PC-9 (cell line): ENCODE measurements at regions of chr9 and their contacts with region 1.

Region 1: GRCh38 chr9:120755827-120756434 is 37.3 kb downstream of the FBXW2 start:
- DNase-seq: peak; percentile 48 to 61
- H3K4me3 ChIP-seq: no peak overlapping the region
- H3K27ac ChIP-seq: 0 out of 2 replicates have a peak overlapping the region, but pooled peaks have one; percentile 13
- H3K4me1 ChIP-seq: no peaks in the 10 kb centered on the region
- H3K27me3 ChIP-seq: no peaks in the 10 kb centered on the region
- CTCF ChIP-seq: peak; percentile 96

Region 2: GRCh38 chr9:120714088-120714845 is 41.7 kb before region 1 on chr9 and contains the start of gene MEGF9:
- CTCF ChIA-PET with region 1: interaction called, 5 read pairs
- POLR2A ChIA-PET with region 1: interaction called, 3 read pairs
- intact Hi-C with region 1: loop called (anchors 1 kb)
- DNase-seq: peak; percentile 91 to 99
- H3K4me3 ChIP-seq: peak within 1 kb of the TSS; percentile 75
- H3K27ac ChIP-seq: peak within 1 kb of the TSS; percentile 69
- H3K4me1 ChIP-seq: peaks cover 70% of the 10 kb centered on the region
- H3K27me3 ChIP-seq: no peaks in the 10 kb centered on the region
- CTCF ChIP-seq: no peak
- total RNA-seq, gene MEGF9: 30.3 and 35.7 TPM in 2 replicates

Region 3: DNA sequence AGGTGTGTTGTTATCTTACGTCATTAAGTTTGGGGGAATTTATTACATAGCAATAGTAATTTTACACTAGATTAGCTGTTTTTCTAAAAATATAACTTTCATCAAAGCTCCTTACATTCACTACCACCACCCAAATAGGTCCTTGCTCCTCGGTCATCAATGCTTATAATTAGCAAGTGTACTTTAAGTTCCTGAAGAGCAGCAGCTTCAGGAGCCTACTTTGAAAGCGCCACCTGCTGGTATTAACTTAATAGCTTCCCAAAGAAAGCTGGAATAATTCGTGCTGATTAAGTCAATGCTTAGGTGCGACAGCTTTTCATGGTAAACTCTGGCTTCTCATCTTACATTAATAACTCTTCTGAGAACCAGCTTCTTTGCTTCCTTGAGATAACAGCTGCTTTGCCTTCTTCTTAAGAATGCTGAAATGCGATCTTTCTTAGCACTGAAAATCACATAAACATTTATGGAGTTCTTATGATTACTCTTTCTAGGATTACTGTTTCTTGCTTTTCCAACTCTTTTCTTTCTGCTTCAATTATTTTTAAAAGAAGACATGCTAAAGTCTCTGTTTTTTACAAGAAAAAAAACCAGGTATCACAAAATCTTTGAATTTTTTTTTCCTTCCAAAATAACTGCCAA is 304.2 kb after region 1 on chr9:
- CTCF ChIA-PET with region 1: interaction called, 12 read pairs
- POLR2A ChIA-PET with region 1: no interaction called
- intact Hi-C with region 1: loop called (anchors 1 kb)
- DNase-seq: peak; percentile 26 to 62
- H3K4me3 ChIP-seq: no peak overlapping the region
- H3K27ac ChIP-seq: no peak overlapping the region
- H3K4me1 ChIP-seq: no peaks in the 10 kb centered on the region
- H3K27me3 ChIP-seq: no peaks in the 10 kb centered on the region
- CTCF ChIP-seq: peak; percentile 82

Region 4: DNA sequence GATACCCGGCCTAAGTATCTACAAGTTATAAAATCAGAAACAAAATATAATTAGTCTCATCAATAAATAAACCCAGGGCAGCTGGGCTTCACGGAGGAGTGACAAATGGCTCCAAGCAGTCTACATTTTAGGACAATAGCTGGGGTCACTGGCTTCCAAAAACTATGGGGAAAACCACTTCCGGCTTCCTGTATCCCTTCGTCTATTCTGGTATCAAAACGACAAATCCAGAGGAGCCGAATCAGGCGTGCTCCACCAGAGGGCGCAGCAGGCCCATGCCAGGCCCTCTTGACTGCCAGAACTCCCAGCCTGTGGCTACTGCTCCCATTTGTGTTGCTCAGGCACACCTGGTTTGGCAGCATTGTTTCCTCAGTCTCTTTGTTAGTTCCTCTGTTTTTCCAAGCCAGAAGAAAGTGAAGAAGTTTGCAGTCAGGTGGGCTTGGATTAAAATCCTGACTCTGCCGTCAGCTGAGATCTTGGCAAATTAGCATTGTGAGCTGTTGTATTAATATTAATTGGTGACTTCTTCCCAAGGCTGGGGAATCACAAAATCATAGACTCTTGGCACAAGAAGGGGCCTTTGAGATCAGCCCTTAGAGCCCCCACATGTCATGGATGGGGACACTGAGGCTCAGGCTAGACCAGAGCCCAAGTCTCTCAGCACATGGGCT is 457.3 kb after region 1 on chr9:
- CTCF ChIA-PET with region 1: no interaction called
- POLR2A ChIA-PET with region 1: no interaction called
- intact Hi-C with region 1: loop called (anchors 2 kb)
- DNase-seq: peak; percentile 78 to 94
- H3K4me3 ChIP-seq: no peak overlapping the region
- H3K27ac ChIP-seq: no peak overlapping the region
- H3K4me1 ChIP-seq: peaks cover 5% of the 10 kb centered on the region; the same call in 1 of the 2 replicates
- H3K27me3 ChIP-seq: no peaks in the 10 kb centered on the region
- CTCF ChIP-seq: peak; percentile 95

Region 5: GRCh38 chr9:121399883-121400607 is 644.1 kb after region 1 on chr9:
- CTCF ChIA-PET with region 1: no interaction called
- POLR2A ChIA-PET with region 1: no interaction called
- intact Hi-C with region 1: loop called (anchors 1 kb)
- DNase-seq: peak in 1 of 2 experiments; percentile 68
- H3K4me3 ChIP-seq: no peak overlapping the region
- H3K27ac ChIP-seq: no peak overlapping the region
- H3K4me1 ChIP-seq: no peaks in the 10 kb centered on the region
- H3K27me3 ChIP-seq: no peaks in the 10 kb centered on the region
- CTCF ChIP-seq: peak; percentile 80